ENCODE measurements at regions of chr2 and their contacts with region 1.

Region 1: DNA sequence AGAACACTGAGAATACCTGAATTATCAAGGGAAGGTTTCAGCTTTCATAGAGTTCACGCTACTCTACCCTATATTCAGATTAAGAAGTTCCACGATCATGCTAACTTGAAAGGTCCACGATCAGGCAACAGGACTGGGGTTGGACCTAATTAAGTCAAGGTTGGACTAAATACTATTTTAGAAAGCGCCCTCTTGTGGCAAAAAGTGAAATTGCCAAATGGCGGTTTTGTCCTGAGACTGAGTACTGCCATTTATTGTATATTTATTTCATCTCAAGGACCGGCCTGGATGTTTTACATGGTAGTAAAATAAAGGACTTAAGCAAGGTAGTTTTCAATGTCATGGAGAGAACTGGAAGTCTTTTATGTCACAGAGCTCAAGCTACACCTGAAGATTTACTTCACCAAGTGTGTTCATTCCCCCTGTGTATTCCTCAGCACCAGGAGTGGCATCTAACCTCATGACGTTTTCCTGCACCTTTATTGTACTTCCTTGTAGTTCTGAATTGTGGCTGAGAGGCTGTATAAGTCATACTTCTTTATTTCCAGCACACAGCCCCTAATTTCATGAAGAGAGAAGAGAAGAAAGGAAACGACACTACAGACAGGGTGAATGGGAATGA is 56.8 kb downstream of the SRD5A2 start:
- DNase-seq: peak; percentile 70
- H3K4me3 Mint-ChIP-seq: no peak overlapping the region
- H3K27ac Mint-ChIP-seq: no peak overlapping the region
- H3K4me1 Mint-ChIP-seq: no peaks in the 10 kb centered on the region
- H3K27me3 Mint-ChIP-seq: peaks cover 45% of the 10 kb centered on the region
- CTCF ChIP-seq: peak; percentile 59

Region 2: DNA sequence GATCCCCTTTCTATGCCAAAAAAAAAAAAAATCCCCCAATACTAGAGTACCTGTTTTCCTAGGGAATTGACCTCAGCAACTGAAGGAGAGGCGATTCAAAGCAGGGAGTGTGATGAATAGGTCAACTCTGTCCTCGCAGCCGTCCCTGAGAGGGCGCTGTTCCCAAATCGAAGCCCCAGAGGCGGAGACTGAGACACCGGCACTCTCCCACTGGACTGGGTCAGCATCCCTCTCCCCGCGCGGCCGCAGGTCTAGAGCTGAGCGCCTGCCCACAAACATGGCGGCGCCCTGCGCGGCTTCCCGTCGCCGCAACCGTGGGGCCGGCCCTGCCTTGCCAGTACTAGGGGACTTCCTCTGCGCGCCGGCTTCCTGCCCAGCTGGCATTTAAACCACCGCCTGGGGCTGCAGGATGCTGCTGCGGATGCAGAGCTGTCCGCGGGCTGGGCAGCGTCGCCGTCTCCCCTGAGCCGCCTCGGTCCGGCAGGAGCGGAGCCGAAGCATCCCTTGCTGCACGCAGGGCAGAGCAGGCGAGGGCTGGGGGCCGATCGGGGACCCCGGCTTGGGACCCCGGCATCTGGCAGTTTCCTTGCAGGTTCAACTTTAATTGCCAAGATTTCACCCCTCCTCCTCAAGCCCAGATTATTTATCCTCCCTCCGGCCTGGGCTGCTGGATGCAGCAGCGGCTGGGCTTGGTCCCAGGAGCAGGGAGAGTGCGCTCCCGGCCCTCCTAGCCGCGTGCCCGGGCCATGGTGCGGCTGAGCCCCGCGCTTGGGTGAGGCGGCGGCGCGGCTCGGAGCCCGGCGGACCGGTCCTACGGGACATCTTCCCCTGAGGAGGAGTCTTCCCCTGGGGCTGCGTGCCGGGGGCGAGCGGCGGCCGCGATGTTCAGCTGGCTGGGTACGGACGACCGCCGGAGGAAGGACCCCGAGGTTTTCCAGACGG is 290.0 kb before region 1 on chr2 and contains the start of gene EHD3:
- CTCF ChIA-PET with region 1: no interaction called
- intact Hi-C with region 1: loop called (anchors 10 kb)
- DNase-seq: peak; percentile 89
- H3K4me3 Mint-ChIP-seq: peak within 1 kb of the TSS; percentile 70
- H3K27ac Mint-ChIP-seq: no peak within 1 kb of the TSS
- H3K4me1 Mint-ChIP-seq: peaks cover 8% of the 10 kb centered on the region
- H3K27me3 Mint-ChIP-seq: peaks cover 46% of the 10 kb centered on the region
- CTCF ChIP-seq: peak; percentile 22
- total RNA-seq, gene EHD3: 1.7 and 2.2 TPM in 2 replicates

Region 3: GRCh38 chr2:31354837-31355236 is 169.1 kb before region 1 on chr2:
- CTCF ChIA-PET with region 1: no interaction called
- intact Hi-C with region 1: loop called (anchors 10 kb)
- DNase-seq: no peak
- H3K4me3 Mint-ChIP-seq: peak overlapping the region; percentile 8
- H3K27ac Mint-ChIP-seq: peak overlapping the region; percentile 20
- H3K4me1 Mint-ChIP-seq: peaks cover 12% of the 10 kb centered on the region
- H3K27me3 Mint-ChIP-seq: no peaks in the 10 kb centered on the region
- CTCF ChIP-seq: peak; percentile 33

Region 4: GRCh38 chr2:31413862-31414550 is 110.0 kb before region 1 on chr2:
- CTCF ChIA-PET with region 1: no interaction called
- intact Hi-C with region 1: loop called (anchors 2 kb)
- DNase-seq: no peak
- H3K4me3 Mint-ChIP-seq: peak overlapping the region; percentile 67
- H3K27ac Mint-ChIP-seq: peak overlapping the region; percentile 86
- H3K4me1 Mint-ChIP-seq: peaks cover 41% of the 10 kb centered on the region
- H3K27me3 Mint-ChIP-seq: no peaks in the 10 kb centered on the region
- CTCF ChIP-seq: peak; percentile 51

Region 5: GRCh38 chr2:31547485-31547884 is 23.5 kb after region 1 on chr2:
- CTCF ChIA-PET with region 1: no interaction called
- intact Hi-C with region 1: no loop called
- DNase-seq: no peak
- H3K4me3 Mint-ChIP-seq: no peak overlapping the region
- H3K27ac Mint-ChIP-seq: no peak overlapping the region
- H3K4me1 Mint-ChIP-seq: no peaks in the 10 kb centered on the region
- H3K27me3 Mint-ChIP-seq: peaks cover 14% of the 10 kb centered on the region
- CTCF ChIP-seq: no peak